Right lobe of liver (tissue), 6 donors: ENCODE measurements at regions of chr18 and their contacts with region 1.

Region 1: GRCh38 chr18:22348521-22349316 is 69.0 kb downstream of the CTAGE1 start:
- DNase-seq: peak; percentile 70 to 88 (median 86)
- ATAC-seq: peak; percentile 46 to 69 (median 63)
- H3K4me3 ChIP-seq: peak overlapping the region; percentile 26 to 58 (median 57)
- H3K27ac ChIP-seq: peak overlapping the region; percentile 77 to 96 (median 93)
- H3K4me1 ChIP-seq: peaks cover 0 to 27% (median 11%) of the 10 kb centered on the region in 4 donors
- H3K27me3 ChIP-seq: no peaks in the 10 kb centered on the region
- CTCF ChIP-seq: no peak
- POLR2A ChIP-seq: peak; percentile 88

Region 2: DNA sequence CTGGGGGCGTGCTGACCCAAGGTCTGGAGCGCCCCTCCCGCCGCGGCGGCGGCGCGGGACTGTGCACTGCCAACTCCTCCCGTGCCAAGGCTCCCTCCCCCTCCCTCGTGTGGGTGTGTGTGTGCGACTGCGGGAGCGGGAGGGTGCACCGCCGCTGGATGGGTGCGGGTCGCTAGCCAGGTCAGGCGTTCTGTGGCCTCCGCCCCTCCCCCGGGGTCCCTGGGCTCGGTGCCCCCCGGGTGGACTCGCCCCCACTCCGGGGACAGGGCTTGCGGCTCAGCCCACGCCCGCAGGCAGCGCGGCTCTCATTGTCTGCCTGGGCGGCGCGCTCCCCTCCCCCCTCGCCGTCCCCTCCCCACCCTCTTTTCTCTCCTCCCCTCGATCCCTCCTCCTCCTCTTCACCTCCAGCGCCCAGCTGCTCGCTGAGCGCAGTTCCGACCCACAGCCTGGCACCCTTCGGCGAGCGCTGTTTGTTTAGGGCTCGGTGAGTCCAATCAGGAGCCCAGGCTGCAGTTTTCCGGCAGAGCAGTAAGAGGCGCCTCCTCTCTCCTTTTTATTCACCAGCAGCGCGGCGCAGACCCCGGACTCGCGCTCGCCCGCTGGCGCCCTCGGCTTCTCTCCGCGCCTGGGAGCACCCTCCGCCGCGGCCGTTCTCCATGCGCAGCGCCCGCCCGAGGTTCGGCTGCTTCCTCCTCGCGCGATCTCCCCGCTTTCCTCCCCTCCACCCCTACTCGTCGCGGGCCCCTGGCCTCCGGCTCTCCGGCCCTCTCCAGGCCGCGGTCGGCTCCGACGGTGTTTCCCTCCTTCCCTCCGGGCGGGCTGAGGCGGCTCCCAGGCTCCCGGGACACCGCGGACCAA is 179.5 kb before region 1 on chr18 and contains the start of gene GATA6:
- intact Hi-C with region 1: loop called in 1 of 2 experiments (anchors 10 kb)
- DNase-seq: peak; percentile 92 to 97 (median 97)
- ATAC-seq: peak; percentile 62 to 83 (median 74)
- H3K4me3 ChIP-seq: peak within 1 kb of the TSS; percentile 50 to 93 (median 72)
- H3K27ac ChIP-seq: peak within 1 kb of the TSS; percentile 90 to 98 (median 95)
- H3K4me1 ChIP-seq: peaks cover 0 to 7% (median 0%) of the 10 kb centered on the region in 4 donors
- H3K27me3 ChIP-seq: no peaks in the 10 kb centered on the region
- CTCF ChIP-seq: peak; percentile 32 to 50 (median 37)
- POLR2A ChIP-seq: peak; percentile 97
- total RNA-seq, gene GATA6: 8.0 to 14.0 (median 9.5) TPM

Region 3: GRCh38 chr18:22422909-22423548 is 74.3 kb after region 1 on chr18:
- intact Hi-C with region 1: loop called in 1 of 2 experiments (anchors 10 kb)
- DNase-seq: peak; percentile 74 to 88 (median 87)
- ATAC-seq: peak; percentile 78 to 87 (median 81)
- H3K4me3 ChIP-seq: no peak overlapping the region
- H3K27ac ChIP-seq: peak overlapping the region; percentile 55 to 88 (median 63)
- H3K4me1 ChIP-seq: peaks cover 0 to 42% (median 13%) of the 10 kb centered on the region in 4 donors
- H3K27me3 ChIP-seq: no peaks in the 10 kb centered on the region
- CTCF ChIP-seq: peak in 1 of 4 donors; percentile 9
- POLR2A ChIP-seq: no peak

Region 4: GRCh38 chr18:22601481-22601880 is 252.8 kb after region 1 on chr18:
- intact Hi-C with region 1: no loop called
- DNase-seq: no peak
- ATAC-seq: no peak
- H3K4me3 ChIP-seq: no peak overlapping the region
- H3K27ac ChIP-seq: no peak overlapping the region
- H3K4me1 ChIP-seq: peaks cover 0 to 24% (median 7%) of the 10 kb centered on the region in 4 donors
- H3K27me3 ChIP-seq: no peaks in the 10 kb centered on the region
- CTCF ChIP-seq: no peak
- POLR2A ChIP-seq: no peak